Activated CD8-positive, alpha-beta memory T cell treated with anti-CD3 and anti-CD28 coated beads, Interleukin-2, amount 10 ng/mL, durations not matched to agents 7 days and 5 days (primary cell): ENCODE measurements at regions of chr5 and their contacts with region 1.

Region 1: DNA sequence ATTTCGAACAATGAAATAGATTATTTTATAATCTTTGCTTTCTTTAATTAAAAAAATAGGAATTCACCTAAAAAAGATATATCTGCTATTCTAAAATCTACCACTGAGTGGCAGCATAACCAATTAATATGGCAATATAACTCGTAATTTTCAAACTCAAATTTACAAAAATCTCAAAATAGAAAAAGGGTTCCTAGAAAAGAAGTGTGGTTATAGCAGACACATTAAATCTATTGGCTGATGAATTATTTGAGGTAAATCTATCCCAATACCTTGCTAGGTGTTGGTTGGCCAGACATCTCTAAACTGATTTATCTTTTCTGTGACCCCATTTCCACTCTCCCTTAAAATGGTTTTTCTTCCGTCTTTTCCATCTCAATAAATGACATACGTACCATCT is 30.2 kb upstream of the NRG2 start:
- DNase-seq: no peak
- ATAC-seq: no peak
- H3K4me3 Mint-ChIP-seq: no peak overlapping the region
- H3K27ac Mint-ChIP-seq: no peak overlapping the region
- H3K4me1 Mint-ChIP-seq: peaks cover 2% of the 10 kb centered on the region
- H3K27me3 Mint-ChIP-seq: peaks cover 51% of the 10 kb centered on the region

Region 2: DNA sequence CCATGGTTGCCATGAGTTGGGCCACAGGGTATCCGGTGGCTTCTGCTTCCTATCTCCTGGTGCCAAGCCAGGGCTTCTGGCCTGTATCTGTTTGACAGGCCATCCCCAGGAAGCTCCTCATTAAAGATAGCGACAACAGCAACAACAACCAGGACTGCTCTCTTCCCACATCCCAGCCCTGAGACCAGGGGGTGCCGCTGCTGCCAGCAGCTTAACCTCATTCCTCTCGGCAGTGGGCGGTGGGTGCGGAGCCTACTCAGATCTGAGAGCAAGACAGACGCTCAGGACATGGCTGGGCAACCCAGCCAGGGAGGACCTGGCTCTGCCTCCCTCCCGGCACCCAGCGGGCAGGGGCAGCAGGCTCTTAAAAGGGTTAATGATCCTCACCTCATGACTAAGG is 179.4 kb before region 1 on chr5:
- CTCF ChIA-PET with region 1: no interaction called
- DNase-seq: no peak
- ATAC-seq: no peak
- H3K4me3 Mint-ChIP-seq: no peak overlapping the region
- H3K27ac Mint-ChIP-seq: no peak overlapping the region
- H3K4me1 Mint-ChIP-seq: peaks cover 1% of the 10 kb centered on the region
- H3K27me3 Mint-ChIP-seq: peaks cover 34% of the 10 kb centered on the region

Region 3: GRCh38 chr5:140094889-140095288 is 21.6 kb after region 1 on chr5:
- CTCF ChIA-PET with region 1: no interaction called
- DNase-seq: no peak
- ATAC-seq: no peak
- H3K4me3 Mint-ChIP-seq: no peak overlapping the region
- H3K27ac Mint-ChIP-seq: no peak overlapping the region
- H3K4me1 Mint-ChIP-seq: no peaks in the 10 kb centered on the region
- H3K27me3 Mint-ChIP-seq: peaks cover 21% of the 10 kb centered on the region

Region 4: DNA sequence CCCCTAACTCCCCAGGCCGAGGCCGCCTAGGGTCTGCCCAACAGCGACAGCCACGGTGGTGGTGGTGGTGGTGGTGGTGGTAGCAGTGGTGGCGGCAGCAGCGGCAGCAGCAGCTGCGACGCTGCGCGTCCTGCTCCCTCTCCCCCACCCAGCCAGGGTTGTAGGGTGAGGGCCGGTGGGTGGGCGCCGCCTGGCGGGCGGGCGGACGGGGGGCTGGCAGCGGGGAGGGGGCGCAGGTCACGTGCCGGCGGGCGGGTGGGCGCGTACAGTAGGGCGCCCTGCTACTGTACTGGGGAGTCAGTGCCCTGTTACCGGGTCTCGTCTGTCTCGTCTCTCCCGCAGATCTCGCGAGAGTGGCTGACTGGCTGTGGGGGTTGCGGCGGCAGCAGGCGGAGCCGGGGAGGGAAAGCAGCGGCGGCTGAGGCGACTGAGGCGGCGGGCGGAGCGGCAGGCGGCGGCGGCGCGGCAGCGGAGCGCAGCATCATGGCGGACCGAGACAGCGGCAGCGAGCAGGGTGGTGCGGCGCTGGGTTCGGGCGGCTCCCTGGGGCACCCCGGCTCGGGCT is 40.5 kb after region 1 on chr5 and contains the start of gene PURA:
- CTCF ChIA-PET with region 1: interaction called, 11 read pairs
- DNase-seq: peak; percentile 98
- ATAC-seq: peak; percentile 89
- H3K4me3 Mint-ChIP-seq: peak within 1 kb of the TSS; percentile 93
- H3K27ac Mint-ChIP-seq: peak within 1 kb of the TSS; percentile 95
- H3K4me1 Mint-ChIP-seq: peaks cover 65% of the 10 kb centered on the region
- H3K27me3 Mint-ChIP-seq: peaks cover 18% of the 10 kb centered on the region
- total RNA-seq, gene PURA: 12.3 to 15.4 TPM

Region 5: GRCh38 chr5:140157032-140157803 is 83.9 kb after region 1 on chr5:
- CTCF ChIA-PET with region 1: interaction called, 28 read pairs
- DNase-seq: peak; percentile 91
- ATAC-seq: peak; percentile 99
- H3K4me3 Mint-ChIP-seq: peak overlapping the region; percentile 57
- H3K27ac Mint-ChIP-seq: peak overlapping the region; percentile 46
- H3K4me1 Mint-ChIP-seq: peaks cover 6% of the 10 kb centered on the region
- H3K27me3 Mint-ChIP-seq: no peaks in the 10 kb centered on the region